ENCODE measurements at regions of chr9 and their contacts with region 1.

Region 1: GRCh38 chr9:93003552-93004407 is 54.7 kb upstream of the SUSD3 start:
- DNase-seq: peak; percentile 49
- H3K4me3 ChIP-seq: no peak overlapping the region
- H3K27ac ChIP-seq: no peak overlapping the region
- H3K4me1 ChIP-seq: no peaks in the 10 kb centered on the region
- H3K27me3 ChIP-seq: no peaks in the 10 kb centered on the region
- CTCF ChIP-seq: peak; percentile 41 to 65 (median 52)
- POLR2A ChIP-seq: no peak

Region 2: GRCh38 chr9:92393686-92394085 is 610.1 kb before region 1 on chr9:
- intact Hi-C with region 1: no loop called
- DNase-seq: no peak
- H3K4me3 ChIP-seq: no peak overlapping the region
- H3K27ac ChIP-seq: peak overlapping the region; percentile 6 to 55
- H3K4me1 ChIP-seq: no peaks in the 10 kb centered on the region
- H3K27me3 ChIP-seq: no peaks in the 10 kb centered on the region
- CTCF ChIP-seq: no peak
- POLR2A ChIP-seq: no peak

Region 3: DNA sequence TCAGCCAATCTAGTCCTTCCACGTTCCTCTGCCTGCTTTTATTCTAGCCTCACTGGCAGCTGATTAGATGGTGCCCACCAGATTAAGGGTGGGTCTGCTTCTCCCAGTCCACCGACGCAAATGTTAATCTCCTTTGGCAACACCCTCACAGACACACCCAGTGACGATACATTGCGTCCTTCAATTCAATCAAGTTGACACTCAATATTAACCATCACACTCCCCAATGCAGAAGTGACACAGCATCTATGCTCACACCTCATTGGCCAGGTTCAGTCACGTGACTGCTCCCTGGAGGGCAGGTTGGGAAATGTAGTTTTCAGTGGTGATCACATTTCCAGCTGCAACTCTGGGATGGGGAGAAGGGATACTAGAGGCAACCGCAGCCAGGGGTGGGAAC is 67.7 kb after region 1 on chr9:
- intact Hi-C with region 1: no loop called
- DNase-seq: no peak
- H3K4me3 ChIP-seq: no peak overlapping the region
- H3K27ac ChIP-seq: no peak overlapping the region
- H3K4me1 ChIP-seq: no peaks in the 10 kb centered on the region
- H3K27me3 ChIP-seq: no peaks in the 10 kb centered on the region
- CTCF ChIP-seq: no peak
- POLR2A ChIP-seq: no peak

Region 4: GRCh38 chr9:93095205-93096130 is 91.7 kb after region 1 on chr9:
- intact Hi-C with region 1: loop called (anchors 10 kb)
- DNase-seq: peak; percentile 100
- H3K4me3 ChIP-seq: peak overlapping the region; percentile 98 to 99
- H3K27ac ChIP-seq: peak overlapping the region; percentile 94 to 95
- H3K4me1 ChIP-seq: peaks cover 11% of the 10 kb centered on the region
- H3K27me3 ChIP-seq: no peaks in the 10 kb centered on the region
- CTCF ChIP-seq: peak in 2 of 4 experiments; percentile 14 to 21
- POLR2A ChIP-seq: peak; percentile 76

Region 5: GRCh38 chr9:93159601-93160471 is 156.1 kb after region 1 on chr9:
- intact Hi-C with region 1: loop called (anchors 10 kb)
- DNase-seq: peak; percentile 81
- H3K4me3 ChIP-seq: no peak overlapping the region
- H3K27ac ChIP-seq: no peak overlapping the region
- H3K4me1 ChIP-seq: no peaks in the 10 kb centered on the region
- H3K27me3 ChIP-seq: no peaks in the 10 kb centered on the region
- CTCF ChIP-seq: peak; percentile 87 to 99 (median 94)
- POLR2A ChIP-seq: no peak

Region 6: GRCh38 chr9:93207841-93208748 is 204.3 kb after region 1 on chr9:
- intact Hi-C with region 1: no loop called
- DNase-seq: no peak
- H3K4me3 ChIP-seq: no peak overlapping the region
- H3K27ac ChIP-seq: peak overlapping the region in 1 of 2 donors; percentile 50
- H3K4me1 ChIP-seq: peaks cover 14% of the 10 kb centered on the region
- H3K27me3 ChIP-seq: no peaks in the 10 kb centered on the region
- CTCF ChIP-seq: no peak
- POLR2A ChIP-seq: no peak

Measured in prostate gland (tissue), 2 donors.